ENCODE measurements at regions of chr10 and their contacts with region 1.

Region 1: GRCh38 chr10:86440874-86441843 is 74.6 kb upstream of the GRID1 start:
- H3K4me3 Mint-ChIP-seq: no peak overlapping the region
- H3K27ac Mint-ChIP-seq: peak overlapping the region; percentile 4
- H3K4me1 Mint-ChIP-seq: peaks cover 25% of the 10 kb centered on the region
- H3K27me3 Mint-ChIP-seq: no peaks in the 10 kb centered on the region

Region 2: GRCh38 chr10:86506499-86506898 is 65.3 kb after region 1 on chr10:
- intact Hi-C with region 1: loop called (anchors 5 kb)
- H3K4me3 Mint-ChIP-seq: no peak overlapping the region
- H3K27ac Mint-ChIP-seq: no peak overlapping the region
- H3K4me1 Mint-ChIP-seq: peaks cover 15% of the 10 kb centered on the region
- H3K27me3 Mint-ChIP-seq: no peaks in the 10 kb centered on the region

Measured in dendritic cell treated with granulocyte-macrophage colony-stimulating factor and Interleukin-4, amounts not matched to agents 40 ng/mL and 50 ng/mL, for 4 days (primary cell).